ENCODE measurements at regions of chr1 and their contacts with region 1.

Region 1: DNA sequence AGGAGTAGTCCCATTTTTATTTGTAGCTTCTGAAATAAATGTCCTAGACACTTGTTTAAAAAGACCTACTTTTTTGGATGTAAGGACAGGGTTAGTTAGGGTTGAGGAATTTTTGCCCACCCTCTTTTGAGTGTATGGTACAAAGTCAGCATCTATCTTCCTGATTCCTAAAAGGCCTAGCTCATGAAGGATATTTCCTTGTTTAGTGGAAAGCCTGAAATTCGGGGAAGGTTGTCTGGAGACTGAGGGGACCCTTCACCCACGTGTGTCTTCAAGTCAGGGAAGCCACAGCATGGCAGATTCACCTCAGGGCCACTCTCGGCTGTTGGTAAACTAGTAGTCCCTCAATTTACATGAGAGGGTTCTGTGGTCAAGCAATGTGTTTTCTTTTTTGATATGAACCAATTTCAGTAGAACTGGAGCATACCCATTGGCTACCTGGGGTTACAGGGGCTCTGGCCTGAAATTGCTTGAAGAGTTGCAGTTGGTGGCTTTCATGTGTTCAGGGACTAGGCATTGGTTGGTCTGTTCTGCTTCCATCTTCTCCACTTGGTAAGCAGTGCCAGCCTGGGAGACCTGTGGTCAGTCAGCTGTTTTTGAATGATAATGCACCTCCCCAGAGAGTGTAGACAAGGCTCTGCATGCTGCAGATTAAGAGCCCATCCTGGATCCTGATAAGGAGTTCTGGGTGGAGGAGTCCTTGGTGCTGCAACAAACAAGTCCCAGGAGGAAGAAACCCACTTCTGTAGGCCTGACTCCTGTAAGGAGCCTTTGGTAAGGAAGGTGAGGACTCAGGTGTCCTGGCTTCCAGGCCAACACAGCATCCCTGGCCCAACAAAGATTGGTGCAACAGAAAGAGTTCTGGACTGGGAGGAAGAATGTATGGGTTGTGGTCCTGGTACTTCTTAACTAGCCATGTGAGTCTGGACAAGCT is 6.3 kb downstream of the BTG2 start:
- DNase-seq: peak; percentile 43
- H3K4me3 ChIP-seq: no peak overlapping the region
- H3K27ac ChIP-seq: peak overlapping the region; percentile 47
- H3K4me1 ChIP-seq: peaks cover 66% of the 10 kb centered on the region
- CTCF ChIP-seq: no peak

Region 2: DNA sequence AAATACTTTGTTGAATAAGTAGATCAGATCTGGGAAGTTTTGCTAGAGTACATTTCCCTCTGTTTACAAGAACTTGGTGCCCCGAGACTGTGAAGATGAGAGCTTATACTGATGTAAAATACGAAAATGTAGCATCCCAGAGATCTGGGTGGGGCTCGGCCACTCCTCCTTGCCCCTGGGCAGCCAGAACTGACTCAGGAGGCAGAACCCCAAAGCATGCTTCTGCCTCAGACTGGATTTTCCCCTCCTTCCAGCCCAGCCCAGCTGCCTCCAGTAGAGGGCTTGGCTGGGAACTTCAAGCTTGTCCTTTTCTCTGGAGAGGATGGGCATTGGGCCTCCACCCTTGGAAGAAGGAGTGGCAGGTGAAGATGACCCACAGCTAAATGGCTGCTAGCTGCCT is 30.6 kb before region 1 on chr1:
- CTCF ChIA-PET with region 1: interaction called, 5 read pairs
- POLR2A ChIA-PET with region 1: interaction called, 241 read pairs
- intact Hi-C with region 1: no loop called
- DNase-seq: peak; percentile 4
- H3K4me3 ChIP-seq: no peak overlapping the region
- H3K27ac ChIP-seq: peak overlapping the region; percentile 99
- H3K4me1 ChIP-seq: peaks cover 98% of the 10 kb centered on the region
- CTCF ChIP-seq: 0 out of 2 replicates have a peak, but pooled peaks have one; percentile 21